Posterior vena cava (tissue), 2 donors: ENCODE measurements at regions of chr2 and their contacts with region 1.

Region 1: GRCh38 chr2:84970868-84971509 is at the start of gene KCMF1:
- DNase-seq: peak; percentile 90
- total RNA-seq, gene KCMF1: 56.9 to 73.4 TPM

Region 2: DNA sequence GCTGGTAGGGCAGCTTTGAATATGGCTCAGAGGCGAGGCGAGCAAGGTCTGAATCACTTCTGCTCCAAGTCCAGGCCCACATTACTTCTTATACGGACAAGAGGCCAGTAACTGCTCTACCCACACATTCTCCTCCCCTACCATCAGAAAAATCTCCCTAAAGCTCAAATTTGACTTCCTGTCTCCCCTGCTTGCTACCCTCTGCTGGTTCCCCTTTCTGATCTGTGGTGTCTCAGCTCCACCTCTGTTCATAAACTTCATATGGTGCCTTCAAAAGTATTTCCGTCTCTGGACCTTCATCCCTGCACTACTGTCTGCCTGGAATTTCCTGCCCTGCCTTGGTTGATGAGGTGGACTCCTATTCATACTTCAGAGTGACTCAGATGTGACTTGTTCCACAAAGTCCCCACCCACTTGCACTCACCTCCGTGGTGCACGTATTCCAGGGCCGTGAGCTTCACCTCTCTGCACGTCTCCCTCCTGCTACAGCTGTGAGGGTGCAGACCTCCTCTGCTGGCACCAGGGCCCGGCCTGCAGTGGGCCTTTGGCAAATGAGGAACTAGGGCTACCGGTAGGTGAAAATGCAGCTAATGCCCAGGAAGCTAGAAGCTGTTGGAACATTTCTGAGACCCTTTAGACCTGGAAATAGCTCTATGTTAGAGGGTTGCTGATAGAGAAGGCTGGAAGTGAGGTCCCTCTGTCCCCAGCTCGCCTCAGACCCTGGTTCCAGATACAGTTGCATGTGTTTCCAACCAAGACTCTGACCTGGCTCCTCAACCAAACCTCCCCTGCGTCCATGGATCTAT is 24.6 kb before region 1 on chr2:
- intact Hi-C with region 1: loop called in 1 of 2 experiments (anchors 2 kb)
- DNase-seq: no peak

Region 3: DNA sequence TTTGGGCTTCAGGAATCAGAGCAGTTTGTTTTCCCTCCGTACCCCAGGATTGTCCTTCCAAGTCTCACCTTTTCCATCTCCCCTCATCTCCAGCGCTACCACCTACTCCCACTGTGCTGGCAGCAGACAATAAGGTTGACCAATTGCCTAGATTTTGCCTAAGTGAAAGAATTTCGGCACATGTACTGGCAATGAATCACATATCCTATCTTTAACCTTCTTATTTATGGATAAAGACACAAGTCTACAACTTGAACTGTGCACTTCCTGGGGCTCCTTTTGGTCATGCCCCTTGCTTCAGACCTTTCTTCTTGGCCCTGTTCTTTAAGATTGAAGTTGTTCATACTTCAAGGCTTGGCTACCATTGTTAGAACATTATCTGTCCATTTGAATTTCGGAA is 71.3 kb after region 1 on chr2:
- intact Hi-C with region 1: loop called in 1 of 2 experiments (anchors 10 kb)
- DNase-seq: no peak

Region 4: DNA sequence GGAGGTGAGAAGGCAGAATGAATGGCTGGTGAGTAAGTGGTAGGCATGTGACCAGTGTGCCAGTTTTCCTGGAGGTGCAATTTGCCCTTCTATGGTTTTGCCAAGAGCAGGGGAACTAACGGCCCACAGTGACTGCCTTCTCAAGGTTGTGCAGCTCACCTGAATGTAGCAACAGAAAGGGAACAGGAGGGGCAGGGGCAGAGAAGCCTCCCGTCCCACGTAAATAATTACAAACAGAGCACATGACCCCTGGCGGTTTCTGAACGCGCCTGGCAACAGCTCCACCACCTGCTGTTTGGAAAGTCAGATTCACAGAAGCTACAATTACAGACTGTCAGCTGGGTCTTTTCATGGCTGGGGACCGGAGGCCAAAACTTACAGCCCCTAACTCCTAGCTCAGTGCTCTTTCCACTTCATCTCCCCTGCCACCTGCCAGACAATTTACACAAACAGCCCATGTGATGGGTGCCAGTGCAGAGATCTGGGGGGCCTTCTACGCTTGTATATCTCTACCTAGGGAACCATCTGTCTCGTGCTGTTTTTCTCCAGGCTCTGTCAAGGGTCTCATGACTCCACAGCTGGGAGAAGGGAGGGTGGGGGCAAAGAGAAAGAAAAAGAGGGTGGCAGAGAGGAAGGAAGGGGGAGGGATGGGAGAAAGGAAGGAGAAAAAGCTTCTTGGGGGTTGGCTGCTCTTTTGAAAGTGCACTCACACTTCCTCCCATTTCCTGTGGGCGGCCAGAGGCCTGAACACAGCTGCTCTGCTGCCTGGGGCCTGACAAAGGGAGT is 1065.1 kb after region 1 on chr2:
- intact Hi-C with region 1: loop called in 1 of 2 experiments (anchors 5 kb)
- DNase-seq: peak; percentile 92